ENCODE measurements at regions of chr12 and their contacts with region 1.

Region 1: GRCh38 chr12:12837025-12837872 is 24.1 kb downstream of the DDX47 start:
- DNase-seq: peak; percentile 54
- CTCF ChIP-seq: peak; percentile 44

Region 2: GRCh38 chr12:12294215-12295005 is 542.8 kb before region 1 on chr12:
- CTCF ChIA-PET with region 1: no interaction called
- POLR2A ChIA-PET with region 1: no interaction called
- DNase-seq: no peak
- CTCF ChIP-seq: no peak

Region 3: DNA sequence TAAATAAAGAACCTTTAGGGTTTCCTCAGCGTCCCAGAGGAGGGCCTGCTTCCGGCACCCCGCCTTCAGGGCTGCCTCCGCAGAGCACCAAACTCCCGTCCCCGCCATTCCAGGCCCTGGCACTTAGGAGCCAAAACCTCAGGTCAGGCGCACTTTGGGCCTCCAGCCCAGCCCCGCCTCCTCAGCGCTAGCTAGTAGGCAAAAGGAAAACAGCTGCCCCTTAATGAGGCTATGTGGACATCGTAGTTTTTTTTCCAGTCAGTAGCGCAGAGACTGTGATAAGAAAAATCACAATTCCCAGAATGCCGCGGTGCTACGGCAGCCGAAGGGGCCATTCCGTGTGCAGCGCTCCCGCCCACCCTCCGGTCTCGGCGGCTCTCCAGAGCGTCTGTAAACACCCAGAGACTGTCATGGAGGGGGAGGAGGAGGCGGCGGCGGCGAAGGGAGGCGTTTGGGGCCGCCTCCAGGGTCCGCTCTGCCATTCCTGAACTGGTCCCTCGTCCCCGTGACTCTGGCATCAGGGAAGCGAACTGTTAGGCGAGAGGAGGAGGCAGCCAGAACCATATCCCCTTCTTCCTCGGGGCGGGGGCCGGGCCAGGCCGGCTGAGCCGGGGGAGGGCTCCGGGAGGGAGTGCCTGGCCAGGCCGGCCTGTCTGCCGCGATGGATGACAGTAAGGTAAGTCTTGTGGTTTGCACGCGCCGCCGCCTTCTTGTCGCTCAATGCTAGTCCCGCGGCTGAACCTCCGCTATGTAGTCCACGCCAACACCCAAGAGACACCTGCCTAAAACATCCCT is 225.5 kb before region 1 on chr12 and contains the start of gene CREBL2:
- CTCF ChIA-PET with region 1: no interaction called
- POLR2A ChIA-PET with region 1: no interaction called
- DNase-seq: peak; percentile 88
- CTCF ChIP-seq: no peak

Region 4: GRCh38 chr12:12813120-12814101 is 23.8 kb before region 1 on chr12 and contains the start of gene DDX47:
- CTCF ChIA-PET with region 1: interaction called, 41 read pairs
- POLR2A ChIA-PET with region 1: no interaction called
- DNase-seq: peak; percentile 92
- CTCF ChIP-seq: peak; percentile 98

Region 5: DNA sequence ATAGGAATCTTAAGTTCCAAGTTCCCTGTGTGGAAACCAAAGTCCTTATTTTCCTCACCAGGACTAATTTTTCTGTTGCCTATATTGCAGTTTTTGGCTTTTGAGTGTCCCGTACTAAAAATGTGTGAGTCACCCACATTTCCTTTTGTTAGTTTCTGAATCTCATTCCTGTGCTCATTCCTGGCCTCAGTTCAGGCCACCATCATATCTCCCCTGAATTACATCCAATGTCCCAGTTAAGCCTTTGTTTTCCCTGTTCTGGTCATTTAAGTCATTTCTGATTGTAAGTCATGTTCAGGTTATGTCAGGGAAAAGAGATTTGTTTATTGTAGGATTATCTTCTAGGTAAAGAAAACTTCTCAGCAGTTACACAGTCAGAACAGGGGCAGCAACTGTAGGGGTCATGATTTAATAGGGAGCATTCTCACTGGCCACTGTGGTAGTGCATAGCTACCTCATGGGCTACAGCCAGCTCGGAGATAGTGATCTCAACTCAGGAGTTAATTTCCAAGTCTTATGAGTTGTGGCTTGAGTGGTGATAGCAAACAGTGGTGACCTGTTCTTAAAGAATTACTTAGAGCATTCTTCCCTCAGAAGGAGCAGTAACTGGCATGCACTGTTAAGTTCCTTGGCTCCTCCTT is 17.5 kb before region 1 on chr12:
- CTCF ChIA-PET with region 1: interaction called, 41 read pairs
- POLR2A ChIA-PET with region 1: no interaction called
- DNase-seq: no peak
- CTCF ChIP-seq: no peak

Region 6: DNA sequence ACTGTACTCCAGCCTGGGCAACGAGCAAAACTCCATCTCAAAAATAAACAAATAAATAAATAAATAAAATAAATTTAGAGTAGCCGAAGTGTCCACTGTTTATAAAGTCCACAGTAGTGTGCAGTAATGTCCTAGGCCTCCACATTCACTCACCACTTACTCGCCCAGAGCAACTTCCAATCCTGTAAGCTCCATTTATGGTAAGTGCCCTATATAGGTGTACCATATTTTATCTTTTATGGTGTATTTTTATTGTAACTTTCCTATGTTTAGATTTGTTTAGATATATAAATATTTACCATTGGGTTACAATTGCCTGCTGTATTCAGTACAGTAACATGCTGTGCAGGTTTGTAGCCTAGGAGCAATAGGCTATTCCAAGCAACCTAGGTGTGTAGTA is 16.2 kb after region 1 on chr12:
- CTCF ChIA-PET with region 1: interaction called, 10 read pairs
- POLR2A ChIA-PET with region 1: no interaction called
- DNase-seq: no peak
- CTCF ChIP-seq: no peak

Region 7: DNA sequence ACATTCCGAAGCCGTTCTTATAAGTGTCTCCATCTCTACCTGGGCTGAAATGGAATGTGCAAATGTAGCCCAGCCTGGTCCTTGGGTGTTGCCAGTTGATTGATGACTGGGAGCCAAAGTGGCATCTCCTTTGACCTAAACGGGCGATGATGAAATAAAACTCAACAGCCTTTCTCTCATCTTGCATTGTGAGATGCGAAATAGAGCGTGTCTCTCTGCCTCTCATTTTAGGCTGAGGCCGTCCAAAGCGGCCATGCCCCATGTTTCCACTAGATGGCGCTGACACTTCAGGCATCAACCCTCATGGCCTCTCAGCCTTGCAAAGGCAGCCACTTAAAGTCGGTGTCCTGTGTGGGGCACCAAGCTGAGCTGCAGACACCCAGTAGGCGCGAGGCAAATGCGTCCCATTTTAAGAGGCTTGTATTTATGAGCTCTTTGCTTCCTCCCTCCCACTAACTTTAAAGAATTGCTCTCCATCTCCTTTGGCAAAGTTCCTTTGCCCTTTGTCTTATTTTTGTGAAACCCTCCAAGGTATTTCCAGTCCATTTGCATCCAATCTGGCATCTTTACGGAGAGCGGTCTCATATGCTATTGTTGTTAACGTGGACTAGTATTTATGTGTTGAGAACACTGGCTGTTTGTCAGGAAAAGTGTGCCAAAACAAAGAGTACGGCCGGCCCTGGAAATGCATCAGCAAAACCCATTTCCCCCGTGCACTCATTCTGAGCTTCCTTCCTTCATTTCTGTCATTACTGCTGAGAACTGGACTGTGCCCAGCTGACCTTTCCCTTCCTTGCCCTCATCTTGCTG is 79.1 kb after region 1 on chr12:
- CTCF ChIA-PET with region 1: no interaction called
- POLR2A ChIA-PET with region 1: no interaction called
- DNase-seq: peak; percentile 82
- CTCF ChIP-seq: peak; percentile 96

Measured in GM10248 (cell line).